Posterior vena cava (tissue), 2 donors: ENCODE measurements at regions of chr2 and their contacts with region 1.

Region 1: GRCh38 chr2:230643576-230644291 is 68.9 kb upstream of the CAB39 start:
- DNase-seq: peak; percentile 86

Region 2: GRCh38 chr2:230703514-230703913 is 59.8 kb after region 1 on chr2:
- intact Hi-C with region 1: loop called in 1 of 2 experiments (anchors 2 kb)
- DNase-seq: no peak